ENCODE measurements at regions of chr9 and their contacts with region 1.

Region 1: DNA sequence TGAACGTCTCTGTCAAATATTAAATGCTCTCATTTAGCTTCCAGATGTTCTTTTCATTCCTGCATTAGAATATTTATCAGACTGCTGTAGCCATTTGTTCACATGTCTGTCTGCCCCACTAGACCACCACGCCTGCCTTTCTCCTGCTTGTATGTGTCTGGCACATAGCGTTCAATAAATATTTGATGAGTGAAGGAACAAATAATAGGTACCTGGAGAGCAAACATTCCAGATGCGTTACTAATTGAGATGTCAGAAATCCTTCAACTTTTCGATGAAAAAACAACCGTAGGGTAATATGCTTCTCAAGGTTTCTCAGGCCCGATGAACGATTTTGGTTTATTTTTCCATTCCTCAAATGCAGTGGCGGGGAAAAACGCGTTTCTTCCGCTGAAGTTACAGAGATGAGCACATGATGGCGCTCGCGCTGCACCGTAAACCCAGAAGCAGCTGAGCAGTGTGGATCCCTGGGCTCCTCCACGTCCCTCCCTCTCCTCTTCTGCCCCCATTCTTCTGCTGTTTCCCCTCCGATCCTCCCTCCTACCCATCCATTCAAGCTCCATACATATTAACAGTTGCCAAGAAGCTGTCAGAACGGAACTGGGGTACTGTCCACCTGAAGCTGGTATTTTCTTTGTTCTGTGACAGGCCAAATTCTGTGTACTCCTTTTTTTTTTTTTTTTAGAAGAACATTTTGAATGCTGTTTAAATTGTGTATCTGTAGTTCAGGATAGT is 245.4 kb downstream of the MPDZ start:
- DNase-seq: peak; percentile 72
- ATAC-seq: peak; percentile 92 to 93

Region 2: DNA sequence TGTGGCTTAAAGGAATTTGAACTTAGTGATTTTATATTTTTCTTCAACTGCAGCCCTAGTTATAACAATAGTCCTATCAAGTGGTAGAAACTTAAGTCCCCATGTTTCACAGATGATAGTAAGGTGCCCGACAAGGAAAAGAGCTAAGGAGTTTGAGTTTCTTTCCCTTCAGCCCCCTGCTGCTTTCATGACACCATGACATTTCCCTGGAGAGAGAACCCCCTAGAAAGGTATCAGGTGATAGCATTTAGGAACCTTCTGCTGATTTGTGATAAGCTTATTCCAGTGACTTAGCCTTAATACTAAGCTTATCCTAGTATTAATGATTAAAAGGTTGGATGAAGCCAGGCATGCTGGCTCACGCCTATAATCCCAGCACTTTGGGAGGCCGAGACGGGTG is 964.8 kb before region 1 on chr9:
- intact Hi-C with region 1: no loop called
- DNase-seq: no peak
- ATAC-seq: no peak

Region 3: GRCh38 chr9:13088720-13089427 is 54.7 kb after region 1 on chr9:
- intact Hi-C with region 1: loop called (anchors 2 to 10 kb)
- DNase-seq: peak; percentile 20
- ATAC-seq: peak; percentile 70 to 71

Measured in left cardiac atrium (tissue), 4 donors.